ENCODE measurements at regions of chr21 and their contacts with region 1.

Region 1: GRCh38 chr21:42233067-42233961 is 14.4 kb downstream of the ABCG1 start:
- DNase-seq: peak; percentile 93
- ATAC-seq: peak; percentile 69
- H3K4me3 Mint-ChIP-seq: peak overlapping the region; percentile 68
- H3K27ac Mint-ChIP-seq: peak overlapping the region; percentile 97
- H3K4me1 Mint-ChIP-seq: peaks cover 95% of the 10 kb centered on the region
- H3K27me3 Mint-ChIP-seq: no peaks in the 10 kb centered on the region

Region 2: DNA sequence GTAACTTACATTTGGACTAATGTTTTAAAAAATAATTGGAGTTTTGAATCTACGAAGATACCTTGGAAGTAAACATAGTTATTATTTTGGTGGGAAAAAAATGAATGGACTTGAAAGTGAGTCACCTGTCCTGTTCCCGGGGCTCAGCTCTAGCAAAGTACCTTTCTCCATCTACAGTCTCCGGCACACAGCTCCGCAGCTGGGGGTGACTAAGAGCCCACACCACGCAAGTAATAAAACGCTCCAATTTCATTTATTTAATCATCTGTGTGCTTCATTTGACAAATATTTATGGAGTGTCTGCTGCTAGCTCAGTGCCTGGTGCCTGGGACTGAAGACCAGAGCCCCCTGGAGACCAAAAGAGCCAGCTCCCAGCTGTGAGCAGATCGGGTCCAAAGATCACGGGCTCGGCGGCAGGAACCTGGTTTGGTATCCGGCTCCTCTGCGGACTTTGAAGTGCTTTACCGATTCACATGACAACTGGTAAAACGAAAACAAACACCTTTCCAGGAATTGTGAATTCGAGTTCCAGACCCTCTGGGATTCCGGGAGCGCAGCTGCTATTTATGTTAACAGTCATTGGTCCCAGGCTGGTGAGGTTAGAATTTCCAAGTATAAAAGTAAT is 464.8 kb before region 1 on chr21:
- CTCF ChIA-PET with region 1: no interaction called
- POLR2A ChIA-PET with region 1: interaction called, 3 read pairs
- intact Hi-C with region 1: loop called in 1 of 2 experiments (anchors 5 kb)
- DNase-seq: peak; percentile 46
- ATAC-seq: peak; percentile 62
- H3K4me3 Mint-ChIP-seq: peak overlapping the region; percentile 66
- H3K27ac Mint-ChIP-seq: no peak overlapping the region
- H3K4me1 Mint-ChIP-seq: peaks cover 25% of the 10 kb centered on the region
- H3K27me3 Mint-ChIP-seq: peaks cover 52% of the 10 kb centered on the region

Region 3: GRCh38 chr21:42062236-42063022 is 170.9 kb before region 1 on chr21:
- CTCF ChIA-PET with region 1: no interaction called
- POLR2A ChIA-PET with region 1: no interaction called
- intact Hi-C with region 1: loop called in 1 of 2 experiments (anchors 5 kb)
- DNase-seq: peak; percentile 86
- ATAC-seq: peak; percentile 65
- H3K4me3 Mint-ChIP-seq: peak overlapping the region; percentile 60
- H3K27ac Mint-ChIP-seq: peak overlapping the region; percentile 86
- H3K4me1 Mint-ChIP-seq: peaks cover 43% of the 10 kb centered on the region
- H3K27me3 Mint-ChIP-seq: no peaks in the 10 kb centered on the region

Region 4: GRCh38 chr21:42220138-42220701 is 13.1 kb before region 1 on chr21:
- CTCF ChIA-PET with region 1: interaction called, 33 read pairs
- POLR2A ChIA-PET with region 1: interaction called, 19 read pairs
- intact Hi-C with region 1: loop called (anchors 1 kb)
- DNase-seq: peak; percentile 82
- ATAC-seq: peak; percentile 89
- H3K4me3 Mint-ChIP-seq: peak overlapping the region; percentile 90
- H3K27ac Mint-ChIP-seq: peak overlapping the region; percentile 96
- H3K4me1 Mint-ChIP-seq: peaks cover 24% of the 10 kb centered on the region
- H3K27me3 Mint-ChIP-seq: no peaks in the 10 kb centered on the region

Region 5: DNA sequence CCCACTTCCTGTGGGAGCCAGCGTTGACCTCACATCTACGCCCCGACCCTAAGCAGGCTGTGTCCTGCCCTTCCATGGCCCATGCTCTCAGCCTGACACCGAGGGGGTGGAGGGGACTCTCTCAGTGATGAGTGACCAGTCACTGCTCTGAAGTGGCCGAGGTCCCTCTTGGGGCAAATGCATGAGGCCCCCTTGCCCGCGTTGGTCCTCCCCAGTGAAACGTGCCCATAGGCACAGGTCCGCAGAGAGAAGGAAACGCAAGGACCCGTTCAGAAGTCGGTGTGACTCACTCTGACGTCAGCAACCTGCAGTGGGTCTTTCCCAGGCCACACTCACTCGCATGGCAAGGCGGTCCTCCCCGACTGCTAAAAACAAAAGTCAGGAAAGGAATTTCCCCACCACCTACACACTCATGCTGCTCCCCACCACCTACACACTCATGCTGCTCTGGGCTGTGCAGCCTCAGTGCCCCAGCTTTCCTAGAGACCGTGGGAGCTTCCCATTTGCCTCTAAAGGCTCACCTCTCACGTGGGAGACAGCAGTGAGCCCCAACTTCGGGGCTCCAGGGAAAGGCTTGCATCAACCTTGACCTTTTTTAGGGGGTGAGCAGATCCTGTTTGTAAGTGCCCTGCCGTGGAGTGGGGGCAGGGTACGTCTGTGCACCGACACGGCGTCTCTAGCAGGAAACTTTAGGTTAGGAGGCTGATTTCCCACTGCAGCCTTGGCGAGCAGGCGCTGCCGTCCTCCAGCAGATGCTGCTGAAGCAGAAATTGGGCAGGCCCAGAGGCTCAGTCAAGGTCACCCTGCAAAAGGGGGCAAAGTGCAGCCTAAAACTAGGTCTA is 181.8 kb after region 1 on chr21:
- CTCF ChIA-PET with region 1: no interaction called
- POLR2A ChIA-PET with region 1: no interaction called
- intact Hi-C with region 1: loop called (anchors 1 to 5 kb)
- DNase-seq: peak; percentile 99
- ATAC-seq: peak; percentile 71
- H3K4me3 Mint-ChIP-seq: peak overlapping the region; percentile 68
- H3K27ac Mint-ChIP-seq: no peak overlapping the region
- H3K4me1 Mint-ChIP-seq: peaks cover 27% of the 10 kb centered on the region
- H3K27me3 Mint-ChIP-seq: no peaks in the 10 kb centered on the region

Region 6: GRCh38 chr21:42892931-42893755 is 659.8 kb after region 1 on chr21 and contains the start of gene NDUFV3:
- CTCF ChIA-PET with region 1: no interaction called
- POLR2A ChIA-PET with region 1: no interaction called
- intact Hi-C with region 1: loop called in 1 of 2 experiments (anchors 10 kb)
- DNase-seq: peak; percentile 100
- ATAC-seq: peak; percentile 97
- H3K4me3 Mint-ChIP-seq: peak within 1 kb of the TSS; percentile 74
- H3K27ac Mint-ChIP-seq: peak within 1 kb of the TSS; percentile 90
- H3K4me1 Mint-ChIP-seq: peaks cover 13% of the 10 kb centered on the region
- H3K27me3 Mint-ChIP-seq: no peaks in the 10 kb centered on the region
- total RNA-seq, gene NDUFV3: 24.6 to 31.8 TPM